HCT116 (cell line): ENCODE measurements at regions of chr10 and their contacts with region 1.

Region 1: DNA sequence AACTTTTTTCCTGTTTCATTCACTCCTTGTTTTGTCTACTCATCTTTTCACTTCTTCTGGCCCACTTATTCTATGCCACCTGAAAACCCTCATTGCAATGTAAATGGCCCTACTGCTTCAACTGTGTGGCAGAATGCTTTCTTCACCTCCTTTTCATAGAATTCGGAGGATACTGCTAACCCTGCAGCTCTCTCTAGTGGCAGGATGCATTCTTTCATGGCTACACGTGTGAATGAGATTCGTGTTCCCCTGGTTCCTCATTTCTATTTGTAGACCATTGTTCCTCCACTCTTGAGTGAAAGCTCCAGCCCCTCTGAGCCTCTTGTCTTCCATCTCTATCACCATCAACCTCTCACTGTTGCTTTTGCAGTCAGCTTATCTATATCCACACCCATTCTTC is 20.9 kb upstream of the CYP26C1 start:
- DNase-seq: peak; percentile 12
- ATAC-seq: peak; percentile 72
- H3K4me3 ChIP-seq: no peak overlapping the region
- H3K27ac ChIP-seq: no peak overlapping the region
- H3K4me1 ChIP-seq: no peaks in the 10 kb centered on the region
- H3K27me3 ChIP-seq: no peaks in the 10 kb centered on the region
- CTCF ChIP-seq: peak; percentile 57 to 68 (median 65); a peak in 5 of 6 replicates
- POLR2A ChIP-seq: no peak
- RAD21 ChIP-seq: peak; percentile 78

Region 2: GRCh38 chr10:92757066-92757710 is 282.5 kb before region 1 on chr10:
- CTCF ChIA-PET with region 1: no interaction called
- POLR2A ChIA-PET with region 1: no interaction called
- RAD21 ChIA-PET with region 1: no interaction called
- intact Hi-C with region 1: no loop called
- DNase-seq: peak; percentile 29
- ATAC-seq: peak; percentile 83
- H3K4me3 ChIP-seq: no peak overlapping the region
- H3K27ac ChIP-seq: no peak overlapping the region
- H3K4me1 ChIP-seq: peaks cover 7 to 8% of the 10 kb centered on the region in 2 experiments; a peak in 3 of 4 replicates
- H3K27me3 ChIP-seq: no peaks in the 10 kb centered on the region
- CTCF ChIP-seq: peak in 1 of 3 experiments; percentile 22; a peak in 1 of 6 replicates
- POLR2A ChIP-seq: no peak
- RAD21 ChIP-seq: no peak

Region 3: DNA sequence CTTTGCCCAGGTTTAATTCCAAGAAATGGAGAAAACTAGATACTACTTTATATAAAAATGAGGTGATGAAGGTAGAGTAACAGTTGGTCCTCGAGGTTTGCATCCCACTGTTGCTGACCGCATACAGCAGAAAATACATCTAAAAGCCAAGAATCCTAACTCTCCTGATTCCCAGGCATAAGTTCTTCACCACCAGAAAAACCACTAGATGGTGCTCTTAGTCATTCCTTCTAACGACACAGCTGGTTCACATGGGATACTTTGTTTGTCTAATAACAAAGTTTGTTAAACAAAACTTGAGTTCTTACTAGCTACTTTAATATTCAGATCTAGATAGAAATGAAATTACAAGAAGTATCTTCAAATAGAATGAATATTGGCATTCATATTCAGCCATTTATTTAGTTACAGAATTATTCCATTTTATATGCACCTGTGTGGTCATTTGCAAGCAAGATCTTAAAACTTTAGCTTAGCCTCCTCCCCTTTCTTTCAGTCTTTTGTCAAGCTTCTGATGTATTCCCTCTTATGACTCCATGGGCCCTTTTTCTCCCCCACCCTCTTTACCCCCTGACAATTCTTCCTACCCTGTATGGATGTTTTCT is 33.2 kb before region 1 on chr10:
- CTCF ChIA-PET with region 1: interaction called, 3 read pairs
- POLR2A ChIA-PET with region 1: no interaction called
- RAD21 ChIA-PET with region 1: no interaction called
- intact Hi-C with region 1: loop called (anchors 2 kb)
- DNase-seq: no peak
- ATAC-seq: peak; percentile 84
- H3K4me3 ChIP-seq: no peak overlapping the region
- H3K27ac ChIP-seq: no peak overlapping the region
- H3K4me1 ChIP-seq: no peaks in the 10 kb centered on the region; a peak in 1 of 4 replicates
- H3K27me3 ChIP-seq: no peaks in the 10 kb centered on the region
- CTCF ChIP-seq: peak; percentile 63 to 72 (median 67)
- POLR2A ChIP-seq: no peak
- RAD21 ChIP-seq: peak; percentile 75